ENCODE measurements at regions of chr7 and their contacts with region 1.

Region 1: DNA sequence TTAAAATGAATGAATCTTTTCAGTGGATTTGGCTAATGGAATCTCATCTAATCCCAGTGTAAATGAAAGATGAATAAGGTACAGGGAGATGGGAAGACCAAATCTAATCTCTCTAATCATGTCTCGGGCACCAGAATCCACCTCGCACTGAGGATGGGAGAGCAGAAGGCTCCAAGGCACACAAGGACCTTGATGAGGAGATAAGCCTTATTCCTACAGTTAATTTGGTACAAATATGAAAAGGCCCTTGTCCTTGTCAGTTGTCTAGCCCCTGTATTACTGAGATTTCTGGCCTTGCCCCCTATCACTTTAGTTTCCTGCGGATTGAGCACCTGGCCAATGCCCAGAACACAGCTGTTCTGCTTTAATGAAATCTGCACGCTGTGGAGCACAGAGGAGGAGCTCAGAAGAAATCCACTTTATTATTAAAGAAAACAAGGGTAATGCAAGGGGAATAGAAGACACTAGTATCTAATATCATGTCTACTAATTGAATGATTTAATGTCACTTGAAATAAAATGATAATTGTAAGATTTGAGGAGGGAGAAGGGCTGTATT is 321.4 kb upstream of the HGF start:
- DNase-seq: no peak
- ATAC-seq: no peak
- H3K4me3 ChIP-seq: no peak overlapping the region
- H3K4me3 Mint-ChIP-seq: no peak overlapping the region
- H3K27ac ChIP-seq: no peak overlapping the region
- H3K27ac Mint-ChIP-seq: no peak overlapping the region
- H3K4me1 ChIP-seq: no peaks in the 10 kb centered on the region
- H3K4me1 Mint-ChIP-seq: no peaks in the 10 kb centered on the region
- H3K27me3 ChIP-seq: no peaks in the 10 kb centered on the region
- H3K27me3 Mint-ChIP-seq: no peaks in the 10 kb centered on the region

Region 2: GRCh38 chr7:82080254-82080927 is 10.8 kb before region 1 on chr7:
- CTCF ChIA-PET with region 1: no interaction called
- POLR2A ChIA-PET with region 1: no interaction called
- intact Hi-C with region 1: loop called in 1 of 2 experiments (anchors 2 kb)
- DNase-seq: no peak
- ATAC-seq: no peak
- H3K4me3 ChIP-seq: no peak overlapping the region
- H3K4me3 Mint-ChIP-seq: no peak overlapping the region
- H3K27ac ChIP-seq: no peak overlapping the region
- H3K27ac Mint-ChIP-seq: no peak overlapping the region
- H3K4me1 ChIP-seq: no peaks in the 10 kb centered on the region
- H3K4me1 Mint-ChIP-seq: no peaks in the 10 kb centered on the region
- H3K27me3 ChIP-seq: no peaks in the 10 kb centered on the region
- H3K27me3 Mint-ChIP-seq: no peaks in the 10 kb centered on the region

Region 3: DNA sequence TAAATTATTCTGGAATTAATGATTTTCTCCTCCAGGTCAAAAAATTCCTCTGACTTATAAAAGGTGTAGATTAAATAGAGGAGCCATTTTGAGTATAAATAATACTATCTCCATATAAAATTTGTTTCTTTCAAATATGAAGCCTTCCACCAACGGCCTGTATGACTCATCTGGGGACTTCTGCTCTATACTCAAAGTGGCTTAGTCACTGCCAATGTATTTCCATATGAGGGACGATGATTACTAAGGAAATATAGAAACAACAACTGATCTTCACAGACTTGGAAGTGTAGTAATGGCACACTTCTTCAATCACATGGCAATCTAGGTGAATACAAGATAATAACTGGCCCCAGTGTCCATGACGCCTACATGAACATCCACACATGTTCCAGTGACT is 14.3 kb after region 1 on chr7:
- CTCF ChIA-PET with region 1: no interaction called
- POLR2A ChIA-PET with region 1: no interaction called
- intact Hi-C with region 1: no loop called
- DNase-seq: no peak
- ATAC-seq: no peak
- H3K4me3 ChIP-seq: no peak overlapping the region
- H3K4me3 Mint-ChIP-seq: no peak overlapping the region
- H3K27ac ChIP-seq: no peak overlapping the region
- H3K27ac Mint-ChIP-seq: no peak overlapping the region
- H3K4me1 ChIP-seq: no peaks in the 10 kb centered on the region
- H3K4me1 Mint-ChIP-seq: no peaks in the 10 kb centered on the region
- H3K27me3 ChIP-seq: no peaks in the 10 kb centered on the region
- H3K27me3 Mint-ChIP-seq: no peaks in the 10 kb centered on the region